ENCODE measurements at regions of chr2 and their contacts with region 1.

Region 1: GRCh38 chr2:112726497-112727190 is 5.8 kb downstream of the NT5DC4 start:
- DNase-seq: peak; percentile 93
- H3K4me3 Mint-ChIP-seq: no peak overlapping the region
- H3K27ac Mint-ChIP-seq: peak overlapping the region; percentile 49
- H3K4me1 Mint-ChIP-seq: peaks cover 27% of the 10 kb centered on the region
- H3K27me3 Mint-ChIP-seq: no peaks in the 10 kb centered on the region

Region 2: DNA sequence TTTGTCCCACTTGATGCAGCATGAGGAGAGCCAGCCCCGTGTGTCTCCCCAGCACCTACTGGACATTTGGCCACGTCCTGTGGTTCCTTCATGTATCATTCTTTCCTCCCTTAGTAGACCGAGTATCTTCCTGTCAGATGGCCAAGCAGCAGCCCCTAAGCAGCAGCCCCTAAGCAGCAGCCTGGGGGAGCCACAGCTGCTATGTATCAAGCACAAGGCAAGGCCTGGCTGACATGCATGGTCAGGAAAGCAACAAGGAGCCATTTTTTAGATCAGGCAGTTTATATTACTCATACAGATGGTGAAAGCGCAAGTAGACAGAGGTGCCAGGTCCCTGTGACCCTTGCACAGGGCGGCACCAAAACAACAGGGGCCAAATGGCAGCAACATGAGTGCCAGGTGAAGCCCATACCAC is 120.1 kb before region 1 on chr2:
- CTCF ChIA-PET with region 1: interaction called, 173 read pairs
- POLR2A ChIA-PET with region 1: interaction called, 13 read pairs
- DNase-seq: no peak
- H3K4me3 Mint-ChIP-seq: no peak overlapping the region
- H3K27ac Mint-ChIP-seq: no peak overlapping the region
- H3K4me1 Mint-ChIP-seq: peaks cover 7% of the 10 kb centered on the region
- H3K27me3 Mint-ChIP-seq: peaks cover 17% of the 10 kb centered on the region

Region 3: DNA sequence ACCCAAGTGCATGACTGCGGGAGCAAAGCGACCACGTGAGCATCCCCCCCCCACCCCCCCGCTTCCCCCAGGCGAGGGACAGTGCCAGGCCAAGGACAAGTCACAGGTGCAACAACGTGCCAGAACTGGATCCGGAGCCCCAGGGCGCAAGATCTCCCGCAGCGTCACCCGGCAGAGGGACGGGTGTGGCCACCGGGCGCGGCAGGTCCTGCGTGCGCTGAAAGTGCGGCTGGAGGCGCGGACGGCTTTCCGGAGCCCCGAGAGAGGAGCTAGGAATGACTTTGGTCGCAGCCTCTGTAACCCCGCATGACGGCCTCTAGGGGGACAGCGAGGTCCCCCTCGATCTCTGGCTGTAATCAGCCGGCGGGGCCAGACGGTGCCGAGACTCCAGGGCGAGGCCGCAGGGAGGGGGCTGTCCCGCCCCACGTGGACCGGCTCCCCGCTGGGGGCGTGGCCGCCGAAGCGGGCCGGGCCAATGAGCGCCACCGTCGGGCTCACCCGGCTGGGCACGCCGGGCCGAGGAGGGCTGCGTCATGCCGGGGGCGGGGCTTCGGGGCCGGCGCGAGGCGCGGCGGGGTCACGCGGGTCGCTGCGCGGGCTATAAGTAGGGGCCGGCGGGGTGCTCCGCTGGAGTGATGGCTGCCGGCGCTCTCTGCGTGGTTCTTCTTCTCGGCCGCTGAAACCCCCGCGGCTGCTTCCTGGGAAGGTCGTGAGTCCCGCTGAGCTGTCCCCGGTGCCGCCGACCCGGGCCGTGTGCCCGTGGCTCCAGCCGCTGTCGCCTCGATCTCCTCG is 81.1 kb before region 1 on chr2 and contains the start of gene SLC20A1:
- CTCF ChIA-PET with region 1: interaction called, 16 read pairs
- POLR2A ChIA-PET with region 1: interaction called, 33 read pairs
- DNase-seq: peak; percentile 98
- H3K4me3 Mint-ChIP-seq: peak within 1 kb of the TSS; percentile 97
- H3K27ac Mint-ChIP-seq: peak within 1 kb of the TSS; percentile 86
- H3K4me1 Mint-ChIP-seq: peaks cover 65% of the 10 kb centered on the region
- H3K27me3 Mint-ChIP-seq: no peaks in the 10 kb centered on the region
- total RNA-seq, gene SLC20A1: 152 to 158 TPM

Region 4: GRCh38 chr2:112671801-112672200 is 54.8 kb before region 1 on chr2:
- CTCF ChIA-PET with region 1: interaction called, 11 read pairs
- POLR2A ChIA-PET with region 1: interaction called, 5 read pairs
- DNase-seq: no peak
- H3K4me3 Mint-ChIP-seq: no peak overlapping the region
- H3K27ac Mint-ChIP-seq: no peak overlapping the region
- H3K4me1 Mint-ChIP-seq: peaks cover 7% of the 10 kb centered on the region
- H3K27me3 Mint-ChIP-seq: no peaks in the 10 kb centered on the region

Region 5: DNA sequence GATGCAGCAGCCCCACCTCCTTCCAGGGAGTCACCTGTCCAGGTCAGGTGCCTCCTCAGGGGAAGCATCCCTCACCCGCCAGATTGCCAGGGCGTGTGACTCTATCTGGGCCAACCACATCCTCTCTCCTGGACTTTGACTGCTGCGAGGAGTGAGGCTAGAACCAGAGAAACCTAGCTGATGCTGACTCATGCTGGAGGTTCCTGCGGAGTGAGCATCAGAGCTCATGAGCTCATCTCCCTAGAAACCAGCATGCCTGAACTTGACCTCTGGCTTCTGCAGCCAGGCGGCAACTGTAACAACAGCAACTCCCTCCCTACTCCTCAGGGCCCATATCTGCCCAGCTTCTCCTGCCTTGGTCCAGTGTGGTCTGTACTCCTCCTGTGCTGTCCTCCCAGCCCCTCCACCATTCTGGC is 34.1 kb before region 1 on chr2:
- CTCF ChIA-PET with region 1: interaction called, 77 read pairs
- POLR2A ChIA-PET with region 1: interaction called, 3 read pairs
- DNase-seq: peak; percentile 86
- H3K4me3 Mint-ChIP-seq: peak overlapping the region; percentile 17
- H3K27ac Mint-ChIP-seq: peak overlapping the region; percentile 90
- H3K4me1 Mint-ChIP-seq: peaks cover 36% of the 10 kb centered on the region
- H3K27me3 Mint-ChIP-seq: no peaks in the 10 kb centered on the region

Region 6: DNA sequence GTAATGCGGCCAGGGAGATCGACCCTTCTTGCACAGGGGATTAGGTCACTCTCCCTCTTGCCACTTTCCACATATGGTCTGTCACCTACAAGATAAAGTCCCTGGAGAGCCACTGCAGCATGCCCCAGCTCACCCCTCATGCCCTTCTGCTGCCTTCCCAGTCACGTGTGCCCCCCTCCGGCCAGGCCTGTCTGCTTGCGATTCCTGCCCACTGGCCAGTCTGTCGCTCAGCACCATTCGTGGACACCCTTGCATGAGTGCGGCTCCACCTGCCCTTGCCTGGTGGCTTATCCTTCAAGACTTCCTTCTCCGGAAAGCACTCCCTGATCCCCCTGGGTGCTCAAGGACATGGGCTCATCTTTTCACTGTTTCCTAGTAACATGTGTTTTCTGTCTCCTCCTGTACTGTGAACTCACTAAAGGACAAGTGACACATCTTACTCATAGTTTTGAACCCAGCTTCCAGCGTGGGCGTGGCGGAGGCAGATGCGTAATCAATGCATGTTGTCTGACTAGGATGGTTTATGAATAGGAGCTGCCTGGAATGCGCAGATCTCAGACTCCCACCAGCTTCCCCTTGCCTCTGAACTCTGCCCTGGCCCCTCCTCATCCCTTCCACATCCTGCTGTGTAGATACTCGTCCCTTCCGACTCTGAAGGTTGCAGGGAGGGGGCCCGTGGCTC is 13.6 kb before region 1 on chr2:
- CTCF ChIA-PET with region 1: interaction called, 44 read pairs
- POLR2A ChIA-PET with region 1: interaction called, 3 read pairs
- DNase-seq: no peak
- H3K4me3 Mint-ChIP-seq: no peak overlapping the region
- H3K27ac Mint-ChIP-seq: no peak overlapping the region
- H3K4me1 Mint-ChIP-seq: peaks cover 37% of the 10 kb centered on the region
- H3K27me3 Mint-ChIP-seq: peaks cover 8% of the 10 kb centered on the region

Region 7: DNA sequence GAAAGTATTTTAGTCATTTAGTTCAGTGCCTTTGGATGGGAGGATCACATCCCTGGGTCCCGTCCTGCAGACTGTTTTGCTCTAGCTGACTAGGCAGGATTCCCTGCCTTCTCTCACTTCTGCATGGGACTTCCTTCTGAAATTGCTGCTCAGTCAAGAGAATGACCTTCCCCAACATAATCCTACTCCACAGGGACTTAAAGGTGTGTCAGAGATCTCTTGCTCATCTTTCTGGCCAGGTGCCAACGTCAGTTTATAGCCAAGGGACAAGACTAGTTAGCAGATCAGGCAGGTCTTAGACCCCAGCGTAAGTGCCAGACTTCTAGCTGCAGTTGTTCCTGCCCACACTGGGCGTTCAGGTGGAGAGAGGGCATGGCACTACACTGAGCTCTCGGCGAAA is 119.4 kb after region 1 on chr2:
- CTCF ChIA-PET with region 1: no interaction called
- POLR2A ChIA-PET with region 1: no interaction called
- DNase-seq: no peak
- H3K4me3 Mint-ChIP-seq: no peak overlapping the region
- H3K27ac Mint-ChIP-seq: no peak overlapping the region
- H3K4me1 Mint-ChIP-seq: peaks cover 3% of the 10 kb centered on the region
- H3K27me3 Mint-ChIP-seq: peaks cover 23% of the 10 kb centered on the region

Region 8: GRCh38 chr2:112941753-112942658 is 215.4 kb after region 1 on chr2:
- CTCF ChIA-PET with region 1: interaction called, 13 read pairs
- POLR2A ChIA-PET with region 1: no interaction called
- DNase-seq: peak; percentile 84
- H3K4me3 Mint-ChIP-seq: no peak overlapping the region
- H3K27ac Mint-ChIP-seq: no peak overlapping the region
- H3K4me1 Mint-ChIP-seq: peaks cover 7% of the 10 kb centered on the region
- H3K27me3 Mint-ChIP-seq: peaks cover 10% of the 10 kb centered on the region

Region 9: DNA sequence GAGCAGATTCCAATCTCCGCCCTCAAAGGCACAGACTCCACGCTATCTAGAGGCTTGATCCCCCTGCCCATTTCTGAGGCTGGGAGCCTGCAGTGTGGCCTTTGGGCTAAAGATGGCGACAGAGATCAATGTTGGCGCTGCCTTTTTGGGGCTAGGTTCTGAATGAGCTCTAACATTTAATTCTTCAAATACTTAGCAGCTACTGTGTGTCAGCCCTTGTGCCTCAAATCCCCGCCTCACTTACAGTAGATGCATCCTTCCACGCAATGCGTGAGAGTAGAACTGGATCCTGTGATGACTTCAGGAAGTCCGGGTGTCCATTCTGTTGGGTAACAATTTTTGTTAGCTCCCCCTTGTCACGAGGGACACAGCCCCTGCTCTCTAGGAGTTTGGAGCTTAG is 353.5 kb after region 1 on chr2:
- CTCF ChIA-PET with region 1: no interaction called
- POLR2A ChIA-PET with region 1: no interaction called
- DNase-seq: peak; percentile 60
- H3K4me3 Mint-ChIP-seq: no peak overlapping the region
- H3K27ac Mint-ChIP-seq: no peak overlapping the region
- H3K4me1 Mint-ChIP-seq: peaks cover 6% of the 10 kb centered on the region
- H3K27me3 Mint-ChIP-seq: peaks cover 15% of the 10 kb centered on the region